Activated CD4-positive, alpha-beta memory T cell treated with anti-CD3 and anti-CD28 coated beads for 36 hours (primary cell): ENCODE measurements at regions of chr5 and their contacts with region 1.

Region 1: GRCh38 chr5:171606414-171607024 is 179.1 kb upstream of the SMIM23 start:
- DNase-seq: no peak
- H3K4me3 Mint-ChIP-seq: no peak overlapping the region
- H3K27ac Mint-ChIP-seq: no peak overlapping the region
- H3K4me1 Mint-ChIP-seq: peaks cover 3% of the 10 kb centered on the region
- H3K27me3 Mint-ChIP-seq: peaks cover 26% of the 10 kb centered on the region

Region 2: GRCh38 chr5:171484460-171484899 is 122.0 kb before region 1 on chr5:
- CTCF ChIA-PET with region 1: interaction called, 13 read pairs
- POLR2A ChIA-PET with region 1: no interaction called
- intact Hi-C with region 1: loop called (anchors 10 kb)
- DNase-seq: peak; percentile 62
- H3K4me3 Mint-ChIP-seq: no peak overlapping the region
- H3K27ac Mint-ChIP-seq: no peak overlapping the region
- H3K4me1 Mint-ChIP-seq: peaks cover 3% of the 10 kb centered on the region
- H3K27me3 Mint-ChIP-seq: peaks cover 7% of the 10 kb centered on the region

Region 3: GRCh38 chr5:171897231-171897630 is 290.7 kb after region 1 on chr5:
- CTCF ChIA-PET with region 1: no interaction called
- POLR2A ChIA-PET with region 1: no interaction called
- intact Hi-C with region 1: no loop called
- DNase-seq: peak; percentile 21
- H3K4me3 Mint-ChIP-seq: no peak overlapping the region
- H3K27ac Mint-ChIP-seq: no peak overlapping the region
- H3K4me1 Mint-ChIP-seq: peaks cover 20% of the 10 kb centered on the region
- H3K27me3 Mint-ChIP-seq: no peaks in the 10 kb centered on the region